Left ventricle myocardium inferior (tissue), 1 donor: ENCODE measurements at regions of chr4 and their contacts with region 1.

Region 1: GRCh38 chr4:88659055-88659889 is 38.4 kb downstream of the NAP1L5 start:
- DNase-seq: no peak
- H3K4me3 ChIP-seq: no peak overlapping the region
- H3K27ac ChIP-seq: peak overlapping the region; percentile 44
- H3K4me1 ChIP-seq: peaks cover 17% of the 10 kb centered on the region
- H3K27me3 ChIP-seq: no peaks in the 10 kb centered on the region
- CTCF ChIP-seq: peak; percentile 90

Region 2: GRCh38 chr4:88526221-88526815 is 133.0 kb before region 1 on chr4:
- intact Hi-C with region 1: loop called (anchors 5 kb)
- DNase-seq: no peak
- H3K4me3 ChIP-seq: no peak overlapping the region
- H3K27ac ChIP-seq: peak overlapping the region; percentile 96
- H3K4me1 ChIP-seq: peaks cover 48% of the 10 kb centered on the region
- H3K27me3 ChIP-seq: no peaks in the 10 kb centered on the region
- CTCF ChIP-seq: peak; percentile 39

Region 3: DNA sequence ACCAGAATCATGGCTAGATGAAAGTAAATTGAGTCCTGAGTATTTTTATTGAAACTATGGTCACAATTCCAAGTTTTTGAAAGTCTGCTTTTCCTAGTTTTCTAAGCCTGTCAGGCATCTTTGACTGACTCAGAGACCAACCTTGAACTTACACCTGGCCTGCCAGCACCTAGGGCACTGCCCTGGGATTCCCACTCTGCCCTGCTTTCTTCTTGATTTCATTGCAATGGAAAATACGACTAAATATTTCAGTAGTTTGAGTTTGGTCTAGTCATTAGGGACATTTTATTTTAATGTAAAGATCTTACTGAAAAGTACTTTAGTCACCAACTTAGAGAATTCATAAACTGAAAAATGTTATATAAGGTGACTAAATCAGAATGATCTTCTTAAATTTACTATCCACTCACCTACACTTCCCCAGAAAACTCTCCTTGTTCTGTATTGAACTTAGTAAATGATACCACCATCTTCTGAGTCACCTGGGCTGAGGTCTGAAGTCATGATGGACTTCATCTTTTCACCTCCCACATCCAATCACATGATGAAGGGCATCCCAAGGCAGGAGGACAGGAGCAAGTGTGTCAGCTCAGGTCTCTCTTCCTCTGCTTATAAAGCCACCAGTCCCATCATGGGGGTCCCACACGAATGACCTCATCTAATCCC is 124.0 kb before region 1 on chr4:
- intact Hi-C with region 1: loop called (anchors 5 kb)
- DNase-seq: no peak
- H3K4me3 ChIP-seq: no peak overlapping the region
- H3K27ac ChIP-seq: no peak overlapping the region
- H3K4me1 ChIP-seq: peaks cover 8% of the 10 kb centered on the region
- H3K27me3 ChIP-seq: no peaks in the 10 kb centered on the region
- CTCF ChIP-seq: no peak

Region 4: GRCh38 chr4:88573995-88574394 is 85.3 kb before region 1 on chr4:
- intact Hi-C with region 1: no loop called
- DNase-seq: no peak
- H3K4me3 ChIP-seq: no peak overlapping the region
- H3K27ac ChIP-seq: no peak overlapping the region
- H3K4me1 ChIP-seq: peaks cover 21% of the 10 kb centered on the region
- H3K27me3 ChIP-seq: no peaks in the 10 kb centered on the region
- CTCF ChIP-seq: peak; percentile 36